ENCODE measurements at regions of chr16 and their contacts with region 1.

Region 1: GRCh38 chr16:23435500-23435899 is 17.5 kb downstream of the COG7 start:
- DNase-seq: peak; percentile 73 to 81
- ATAC-seq: peak; percentile 62
- H3K4me3 ChIP-seq: no peak overlapping the region
- H3K27ac ChIP-seq: no peak overlapping the region
- H3K4me1 ChIP-seq: no peaks in the 10 kb centered on the region
- H3K27me3 ChIP-seq: no peaks in the 10 kb centered on the region

Region 2: GRCh38 chr16:23060458-23061320 is 374.8 kb before region 1 on chr16:
- intact Hi-C with region 1: loop called (anchors 10 kb)
- DNase-seq: peak in 1 of 2 donors; percentile 62
- ATAC-seq: peak; percentile 80
- H3K4me3 ChIP-seq: no peak overlapping the region
- H3K27ac ChIP-seq: no peak overlapping the region
- H3K4me1 ChIP-seq: no peaks in the 10 kb centered on the region
- H3K27me3 ChIP-seq: no peaks in the 10 kb centered on the region

Region 3: DNA sequence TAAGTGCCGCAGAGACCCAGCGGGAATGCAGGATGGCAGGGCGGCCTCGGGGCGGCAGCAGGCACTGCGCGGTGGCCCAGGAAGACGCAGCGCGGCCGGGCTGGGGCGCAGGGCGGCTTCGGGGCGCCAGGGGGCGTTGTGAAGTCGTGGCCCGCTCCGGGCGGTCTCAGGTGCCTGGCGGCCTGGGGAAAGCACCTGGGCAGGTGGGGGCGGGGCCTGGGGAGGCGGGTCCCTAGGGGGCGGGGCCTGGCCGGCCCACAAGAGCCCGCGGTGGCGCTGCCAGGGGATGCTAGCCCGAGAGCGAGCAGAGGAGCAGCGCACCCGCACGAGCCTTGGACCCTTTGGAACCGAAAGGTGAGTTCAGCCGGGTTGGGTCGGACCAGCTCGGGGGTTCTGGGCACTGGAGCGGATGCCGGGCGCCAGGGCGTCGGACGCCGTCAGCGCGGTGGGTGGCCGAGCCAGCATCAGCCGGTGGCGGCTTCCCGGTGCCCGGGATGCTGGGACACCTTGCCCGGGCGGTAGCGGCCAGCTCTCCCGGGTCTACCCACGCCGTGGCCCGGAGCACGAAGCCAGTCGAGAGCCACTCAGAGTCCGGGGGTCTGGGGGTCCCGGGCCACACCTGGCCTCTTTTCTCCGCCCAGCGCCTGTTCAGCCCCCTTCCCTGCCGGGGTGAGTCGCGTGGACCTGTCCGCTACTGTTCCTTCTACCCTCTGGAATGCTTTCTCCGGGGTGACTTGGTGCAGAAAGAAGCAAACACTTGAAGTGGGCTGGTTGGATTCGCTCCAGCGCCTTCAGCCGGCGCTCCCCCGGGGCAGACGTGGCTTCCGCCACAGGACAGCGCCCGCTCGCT is 252.8 kb before region 1 on chr16 and contains the start of gene SCNN1G:
- intact Hi-C with region 1: loop called (anchors 1 kb)
- DNase-seq: peak; percentile 74 to 92
- ATAC-seq: peak; percentile 93
- H3K4me3 ChIP-seq: peak within 1 kb of the TSS; percentile 14 to 30
- H3K27ac ChIP-seq: no peak within 1 kb of the TSS
- H3K4me1 ChIP-seq: no peaks in the 10 kb centered on the region
- H3K27me3 ChIP-seq: peaks cover 0 to 3% of the 10 kb centered on the region in 2 donors
- total RNA-seq, gene SCNN1G: not detected

Region 4: GRCh38 chr16:23248261-23249194 is 187.0 kb before region 1 on chr16:
- intact Hi-C with region 1: loop called in 1 of 2 experiments (anchors 10 kb)
- DNase-seq: no peak
- ATAC-seq: peak; percentile 72
- H3K4me3 ChIP-seq: no peak overlapping the region
- H3K27ac ChIP-seq: peak overlapping the region; percentile 90 to 93
- H3K4me1 ChIP-seq: peaks cover 2 to 4% of the 10 kb centered on the region in 2 donors
- H3K27me3 ChIP-seq: no peaks in the 10 kb centered on the region

Measured in aorta (tissue), 5 donors.